HCT116 (cell line): ENCODE measurements at regions of chr2 and their contacts with region 1.

Region 1: DNA sequence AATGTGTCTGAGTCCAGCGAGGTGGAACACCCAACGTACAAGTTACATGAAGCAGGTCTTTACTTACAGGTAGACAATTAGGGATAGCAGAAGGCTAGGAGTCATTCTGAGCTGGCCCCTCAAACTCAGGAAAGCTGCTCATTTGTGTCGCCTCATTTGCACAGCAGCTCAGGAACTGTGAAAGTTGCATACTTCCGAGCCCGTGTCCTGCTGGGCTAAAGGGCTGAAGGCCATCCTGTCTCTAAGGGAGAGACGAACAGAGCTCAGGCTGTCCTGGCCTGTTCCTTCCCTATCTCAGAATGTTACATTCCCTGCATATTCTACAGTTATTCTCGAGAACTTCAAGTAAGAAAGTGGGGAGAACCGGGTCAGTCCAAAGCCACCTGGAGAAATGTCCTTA is 99.0 kb downstream of the FAM124B start:
- DNase-seq: no peak
- ATAC-seq: no peak
- H3K4me3 ChIP-seq: no peak overlapping the region
- H3K27ac ChIP-seq: no peak overlapping the region
- H3K4me1 ChIP-seq: no peaks in the 10 kb centered on the region
- H3K27me3 ChIP-seq: no peaks in the 10 kb centered on the region
- CTCF ChIP-seq: no peak
- POLR2A ChIP-seq: no peak
- RAD21 ChIP-seq: no peak

Region 2: GRCh38 chr2:222613715-222614331 is 1689.1 kb before region 1 on chr2:
- CTCF ChIA-PET with region 1: no interaction called
- POLR2A ChIA-PET with region 1: no interaction called
- RAD21 ChIA-PET with region 1: no interaction called
- intact Hi-C with region 1: loop called (anchors 5 kb)
- DNase-seq: peak; percentile 15
- ATAC-seq: peak; percentile 92
- H3K4me3 ChIP-seq: no peak overlapping the region
- H3K27ac ChIP-seq: no peak overlapping the region
- H3K4me1 ChIP-seq: no peaks in the 10 kb centered on the region
- H3K27me3 ChIP-seq: no peaks in the 10 kb centered on the region
- CTCF ChIP-seq: peak; percentile 36 to 76 (median 68); a peak in 5 of 6 replicates
- POLR2A ChIP-seq: no peak
- RAD21 ChIP-seq: peak; percentile 67

Region 3: DNA sequence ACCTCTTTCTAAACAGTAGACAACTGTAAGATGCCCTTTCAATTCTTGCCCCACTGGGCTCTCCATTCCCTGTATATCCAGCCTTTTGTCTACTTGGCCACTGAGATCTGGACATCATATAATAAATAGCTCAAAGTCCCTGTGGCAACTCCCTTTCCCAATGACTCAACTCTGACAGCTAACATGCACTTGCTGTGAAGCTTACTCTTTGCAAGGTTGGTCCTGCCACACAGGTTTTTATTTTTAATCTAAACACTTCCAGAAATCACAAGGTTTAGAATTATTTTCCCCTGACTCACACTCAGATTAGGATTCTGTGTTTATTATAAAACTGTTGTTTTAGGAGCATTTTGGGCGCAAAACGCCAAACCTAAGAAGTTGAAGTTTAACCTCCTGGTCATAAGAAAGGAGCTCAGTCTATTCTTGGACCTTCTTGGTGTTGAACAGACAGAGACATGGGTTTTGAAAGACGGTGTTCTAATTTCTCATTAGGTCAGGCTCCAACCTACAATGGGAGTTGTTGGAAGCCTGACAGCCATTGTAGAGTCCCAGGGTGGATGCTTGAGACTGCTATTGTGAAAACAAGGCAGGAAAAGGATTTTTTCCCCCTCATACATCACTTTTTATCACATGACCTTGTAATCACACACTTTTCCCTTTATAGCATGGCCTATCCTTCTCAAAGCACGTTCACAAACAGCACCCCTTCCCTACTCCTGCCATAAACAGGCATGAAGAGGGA is 139.2 kb before region 1 on chr2:
- CTCF ChIA-PET with region 1: no interaction called
- POLR2A ChIA-PET with region 1: no interaction called
- RAD21 ChIA-PET with region 1: no interaction called
- intact Hi-C with region 1: no loop called
- DNase-seq: no peak
- ATAC-seq: no peak
- H3K4me3 ChIP-seq: no peak overlapping the region
- H3K27ac ChIP-seq: no peak overlapping the region
- H3K4me1 ChIP-seq: no peaks in the 10 kb centered on the region
- H3K27me3 ChIP-seq: no peaks in the 10 kb centered on the region
- CTCF ChIP-seq: no peak
- POLR2A ChIP-seq: no peak
- RAD21 ChIP-seq: no peak